ENCODE measurements at regions of chr4 and their contacts with region 1.

Region 1: GRCh38 chr4:88211473-88212252 is 53.2 kb upstream of the ABCG2 start:
- DNase-seq: no peak
- ATAC-seq: peak; percentile 74
- H3K4me3 ChIP-seq: no peak overlapping the region
- H3K27ac ChIP-seq: no peak overlapping the region
- H3K4me1 ChIP-seq: no peaks in the 10 kb centered on the region
- H3K27me3 ChIP-seq: no peaks in the 10 kb centered on the region
- CTCF ChIP-seq: peak; percentile 77

Region 2: GRCh38 chr4:88033309-88033708 is 178.4 kb before region 1 on chr4:
- intact Hi-C with region 1: loop called (anchors 10 kb)
- DNase-seq: no peak
- ATAC-seq: peak; percentile 74
- H3K4me3 ChIP-seq: no peak overlapping the region
- H3K27ac ChIP-seq: no peak overlapping the region
- H3K4me1 ChIP-seq: peaks cover 3% of the 10 kb centered on the region
- H3K27me3 ChIP-seq: no peaks in the 10 kb centered on the region
- CTCF ChIP-seq: peak; percentile 70

Measured in upper lobe of right lung (tissue), 1 donor.